Breast epithelium (tissue), 4 donors: ENCODE measurements at regions of chr14 and their contacts with region 1.

Region 1: DNA sequence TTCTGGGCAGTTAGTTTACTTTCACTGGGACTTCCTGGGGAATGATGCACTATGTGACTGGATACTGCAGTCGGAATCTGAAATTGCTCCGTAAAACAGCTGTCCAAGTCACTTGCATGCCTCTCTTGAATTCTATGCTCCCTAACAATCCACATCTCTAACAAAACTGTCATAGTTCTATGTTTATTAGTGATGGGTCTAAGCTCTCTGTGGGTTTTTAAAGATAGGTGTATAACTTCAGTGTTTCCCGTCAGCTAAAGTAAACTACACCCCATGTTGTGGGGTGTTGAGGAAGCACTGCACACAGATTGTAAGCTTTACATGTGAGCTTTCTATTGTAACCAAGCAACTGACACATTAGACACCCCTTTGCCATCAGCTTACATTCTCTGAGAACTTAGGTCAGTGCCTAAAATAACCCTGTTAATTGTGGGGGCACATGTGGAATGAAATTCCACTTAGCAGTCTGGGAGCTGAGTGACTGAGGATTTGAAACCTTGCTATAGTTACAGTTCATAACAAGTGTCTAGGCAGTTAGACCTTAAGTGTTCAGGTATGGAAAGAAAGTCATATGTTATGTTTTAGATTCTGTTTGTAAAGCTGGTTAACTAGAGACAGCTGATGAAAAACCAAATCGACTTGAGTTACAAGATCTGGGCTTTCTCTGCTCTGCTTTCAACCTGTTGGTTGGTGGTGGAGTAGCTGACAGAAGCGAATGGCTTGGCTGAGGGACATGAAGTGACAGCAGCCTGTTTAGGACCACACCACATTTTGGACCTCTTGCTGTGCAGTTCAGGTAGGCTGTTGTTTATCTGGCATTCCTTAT is 165.7 kb downstream of the AKAP6 start:
- DNase-seq: no peak
- H3K4me3 ChIP-seq: no peak overlapping the region
- H3K27ac ChIP-seq: no peak overlapping the region
- H3K4me1 ChIP-seq: no peaks in the 10 kb centered on the region
- H3K27me3 ChIP-seq: no peaks in the 10 kb centered on the region
- CTCF ChIP-seq: no peak
- POLR2A ChIP-seq: no peak

Region 2: DNA sequence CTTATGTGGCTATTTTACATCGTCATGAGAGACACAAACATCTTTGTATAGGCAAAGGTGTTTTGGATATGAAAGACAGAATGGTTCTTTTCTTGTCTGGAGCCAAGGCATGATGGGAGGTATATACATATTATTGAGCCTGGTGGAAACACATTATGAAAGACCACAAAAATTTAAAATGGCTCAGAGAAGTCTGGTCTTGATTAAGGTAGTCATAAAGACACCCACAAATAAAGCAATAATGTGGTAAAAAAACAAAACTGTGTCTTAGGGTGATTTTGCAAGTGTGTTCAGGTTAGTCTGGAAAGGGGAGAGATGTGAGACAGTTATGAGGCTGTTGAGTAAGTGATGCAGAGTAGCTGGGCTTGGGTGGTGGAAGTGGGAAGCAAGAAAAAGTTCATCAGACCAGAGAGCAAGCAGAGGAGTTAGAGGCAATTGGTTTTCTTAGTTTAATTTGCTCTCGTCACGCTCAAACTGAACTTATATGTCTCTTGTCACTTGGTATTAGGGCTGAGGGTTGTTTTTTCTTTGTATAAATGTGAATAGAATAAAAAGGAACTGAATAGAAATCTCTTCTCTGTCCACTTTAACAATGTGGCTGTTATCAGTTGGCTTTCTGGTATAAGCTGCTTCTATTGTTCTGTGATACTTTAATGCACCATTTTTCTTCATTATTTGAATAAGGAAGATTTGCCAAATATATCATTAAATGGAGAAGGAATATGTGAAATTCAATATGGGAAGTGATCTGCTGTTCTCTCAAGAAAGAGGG is 50.7 kb before region 1 on chr14:
- intact Hi-C with region 1: loop called (anchors 2 kb)
- DNase-seq: no peak
- H3K4me3 ChIP-seq: no peak overlapping the region
- H3K27ac ChIP-seq: no peak overlapping the region
- H3K4me1 ChIP-seq: no peaks in the 10 kb centered on the region
- H3K27me3 ChIP-seq: no peaks in the 10 kb centered on the region
- CTCF ChIP-seq: no peak
- POLR2A ChIP-seq: no peak